B cell (primary cell): ENCODE measurements at regions of chr3 and their contacts with region 1.

Region 1: GRCh38 chr3:31185062-31185357 is 290.5 kb upstream of the GADL1 start:
- DNase-seq: no peak
- ATAC-seq: no peak
- H3K4me3 ChIP-seq: no peak overlapping the region
- H3K4me3 Mint-ChIP-seq: no peak overlapping the region
- H3K27ac ChIP-seq: no peak overlapping the region
- H3K27ac Mint-ChIP-seq: no peak overlapping the region
- H3K4me1 ChIP-seq: no peaks in the 10 kb centered on the region
- H3K4me1 Mint-ChIP-seq: no peaks in the 10 kb centered on the region
- H3K27me3 ChIP-seq: no peaks in the 10 kb centered on the region
- H3K27me3 Mint-ChIP-seq: peaks cover 8% of the 10 kb centered on the region
- CTCF ChIP-seq: no peak

Region 2: GRCh38 chr3:31142127-31142526 is 42.9 kb before region 1 on chr3:
- CTCF ChIA-PET with region 1: no interaction called
- POLR2A ChIA-PET with region 1: no interaction called
- intact Hi-C with region 1: no loop called
- DNase-seq: no peak
- ATAC-seq: no peak
- H3K4me3 ChIP-seq: no peak overlapping the region
- H3K4me3 Mint-ChIP-seq: no peak overlapping the region
- H3K27ac ChIP-seq: no peak overlapping the region
- H3K27ac Mint-ChIP-seq: no peak overlapping the region
- H3K4me1 ChIP-seq: no peaks in the 10 kb centered on the region
- H3K4me1 Mint-ChIP-seq: no peaks in the 10 kb centered on the region
- H3K27me3 ChIP-seq: no peaks in the 10 kb centered on the region
- H3K27me3 Mint-ChIP-seq: peaks cover under 1% of the 10 kb centered on the region
- CTCF ChIP-seq: no peak

Region 3: GRCh38 chr3:31219131-31219843 is 34.3 kb after region 1 on chr3:
- CTCF ChIA-PET with region 1: no interaction called
- POLR2A ChIA-PET with region 1: no interaction called
- intact Hi-C with region 1: no loop called
- DNase-seq: no peak
- ATAC-seq: no peak
- H3K4me3 ChIP-seq: no peak overlapping the region
- H3K4me3 Mint-ChIP-seq: no peak overlapping the region
- H3K27ac ChIP-seq: no peak overlapping the region
- H3K27ac Mint-ChIP-seq: no peak overlapping the region
- H3K4me1 ChIP-seq: peaks cover 26 to 32% of the 10 kb centered on the region in 2 donors
- H3K4me1 Mint-ChIP-seq: peaks cover 28% of the 10 kb centered on the region
- H3K27me3 ChIP-seq: no peaks in the 10 kb centered on the region
- H3K27me3 Mint-ChIP-seq: no peaks in the 10 kb centered on the region
- CTCF ChIP-seq: no peak

Region 4: DNA sequence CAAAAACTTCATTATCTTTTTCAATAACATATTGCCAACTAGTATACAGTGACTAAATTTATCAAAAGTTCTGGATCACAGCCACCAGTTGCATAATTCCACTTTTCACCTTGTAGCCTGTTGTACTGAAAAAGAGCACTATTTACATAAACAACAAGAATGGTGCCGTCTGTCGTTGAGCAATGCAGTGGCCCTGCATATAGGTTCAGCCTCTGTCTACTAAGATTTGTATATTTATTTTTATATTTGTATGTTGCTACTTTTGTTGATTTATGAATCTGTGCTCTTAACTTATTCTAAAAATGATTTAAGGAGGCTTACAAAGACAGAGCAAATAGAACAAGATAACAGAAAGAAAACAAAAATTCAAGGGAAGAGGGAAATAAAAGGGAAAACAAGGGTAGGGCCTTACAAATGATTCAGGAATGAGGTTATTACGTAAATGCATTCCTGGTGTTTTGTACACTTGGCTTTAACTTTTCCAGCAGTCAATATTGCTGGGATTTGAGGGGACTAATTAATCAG is 90.1 kb after region 1 on chr3:
- CTCF ChIA-PET with region 1: no interaction called
- POLR2A ChIA-PET with region 1: no interaction called
- intact Hi-C with region 1: loop called (anchors 10 kb)
- DNase-seq: no peak
- ATAC-seq: no peak
- H3K4me3 ChIP-seq: no peak overlapping the region
- H3K4me3 Mint-ChIP-seq: no peak overlapping the region
- H3K27ac ChIP-seq: no peak overlapping the region
- H3K27ac Mint-ChIP-seq: no peak overlapping the region
- H3K4me1 ChIP-seq: peaks cover 0 to 3% of the 10 kb centered on the region in 2 donors
- H3K4me1 Mint-ChIP-seq: no peaks in the 10 kb centered on the region
- H3K27me3 ChIP-seq: peaks cover 0 to 5% (median 0%) of the 10 kb centered on the region in 4 experiments
- H3K27me3 Mint-ChIP-seq: peaks cover 27% of the 10 kb centered on the region
- CTCF ChIP-seq: no peak